ENCODE measurements at regions of chr18 and their contacts with region 1.

Region 1: DNA sequence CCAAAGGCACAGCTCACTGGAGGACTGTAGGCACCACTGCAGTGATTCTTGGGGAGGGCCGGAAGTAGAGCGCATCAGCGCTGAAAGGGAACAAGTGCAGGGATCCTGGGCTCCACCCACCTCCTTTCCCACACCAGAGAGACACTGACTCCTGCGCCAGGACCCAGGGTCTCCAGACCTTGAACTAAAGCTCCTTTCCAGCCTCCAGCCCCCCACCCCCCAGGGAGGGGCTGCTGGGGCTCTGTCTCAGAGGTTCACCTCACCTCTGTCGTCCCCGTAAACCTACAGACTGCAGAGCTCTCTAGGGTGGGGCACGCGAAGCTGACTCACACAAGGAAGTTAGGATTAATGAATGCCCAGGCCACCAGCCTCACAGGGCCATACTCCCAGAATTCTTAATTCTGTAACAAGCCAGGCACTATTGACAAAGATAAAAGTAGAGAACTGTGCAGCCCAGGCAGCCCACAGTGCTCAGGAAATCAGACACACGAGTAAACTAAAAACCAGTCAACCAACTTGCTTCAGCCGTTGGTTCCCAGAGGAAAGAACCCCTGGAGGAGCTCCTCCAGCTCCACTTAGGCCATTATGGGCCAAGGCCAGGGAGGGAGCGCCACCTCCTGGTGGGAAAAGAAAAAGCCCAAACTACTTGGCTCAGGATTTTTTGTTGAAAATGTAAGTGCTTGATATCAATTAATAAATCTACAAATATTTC is 45.1 kb upstream of the ACAA2 start:
- DNase-seq: peak; percentile 74
- ATAC-seq: peak; percentile 56
- H3K4me3 Mint-ChIP-seq: no peak overlapping the region
- H3K27ac Mint-ChIP-seq: no peak overlapping the region
- H3K4me1 Mint-ChIP-seq: no peaks in the 10 kb centered on the region
- H3K27me3 Mint-ChIP-seq: no peaks in the 10 kb centered on the region
- CTCF ChIP-seq: peak; percentile 97

Region 2: GRCh38 chr18:49510393-49511115 is 347.9 kb before region 1 on chr18:
- CTCF ChIA-PET with region 1: interaction called, 131 read pairs
- POLR2A ChIA-PET with region 1: no interaction called
- intact Hi-C with region 1: loop called (anchors 2 kb)
- DNase-seq: peak; percentile 64
- ATAC-seq: peak; percentile 64
- H3K4me3 Mint-ChIP-seq: no peak overlapping the region
- H3K27ac Mint-ChIP-seq: no peak overlapping the region
- H3K4me1 Mint-ChIP-seq: no peaks in the 10 kb centered on the region
- H3K27me3 Mint-ChIP-seq: peaks cover 12% of the 10 kb centered on the region
- CTCF ChIP-seq: peak; percentile 81

Region 3: DNA sequence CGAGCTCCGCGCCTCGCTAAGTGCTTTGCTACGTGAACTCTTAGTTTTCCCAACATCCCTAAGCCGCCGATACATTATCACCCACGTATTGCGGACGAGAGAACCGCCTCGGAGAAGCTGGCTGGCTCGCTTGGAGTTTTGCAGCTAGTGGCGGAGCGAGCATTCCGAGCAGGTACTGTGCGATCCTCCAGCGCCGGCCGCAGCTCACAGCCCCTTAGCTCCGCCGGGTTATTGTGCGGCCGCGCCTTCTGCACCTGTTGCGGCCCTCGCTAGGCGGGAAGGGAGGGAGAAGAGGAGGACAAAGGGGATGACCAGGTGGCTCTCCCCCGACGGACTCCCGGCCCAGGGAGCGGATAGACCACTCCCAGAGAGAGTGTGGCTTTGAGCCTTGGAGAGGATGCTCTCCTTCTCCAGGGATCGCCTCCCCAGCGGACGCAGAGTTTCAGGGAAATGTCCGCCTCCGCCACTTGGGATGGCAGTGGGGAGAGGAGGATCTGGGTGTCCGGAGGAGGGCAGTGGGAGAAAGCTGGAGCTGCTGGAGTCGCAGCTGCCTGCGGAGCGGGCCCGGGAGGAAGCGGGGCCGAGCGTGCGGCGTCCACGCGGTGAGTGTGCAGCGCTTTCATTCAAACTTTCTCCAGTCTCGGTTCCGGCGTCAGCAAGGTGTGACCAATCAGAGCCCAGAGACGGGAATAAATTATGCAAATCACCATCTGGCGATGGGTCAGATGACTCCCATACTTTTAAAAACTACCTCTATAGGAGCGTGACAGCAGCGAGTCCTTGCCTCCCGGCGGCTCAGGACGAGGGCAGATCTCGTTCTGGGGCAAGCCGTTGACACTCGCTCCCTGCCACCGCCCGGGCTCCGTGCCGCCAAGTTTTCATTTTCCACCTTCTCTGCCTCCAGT is 296.9 kb before region 1 on chr18 and contains the start of gene LIPG:
- CTCF ChIA-PET with region 1: interaction called, 27 read pairs
- POLR2A ChIA-PET with region 1: no interaction called
- intact Hi-C with region 1: loop called (anchors 1 kb)
- DNase-seq: peak; percentile 71
- ATAC-seq: peak; percentile 87
- H3K4me3 Mint-ChIP-seq: peak within 1 kb of the TSS; percentile 61
- H3K27ac Mint-ChIP-seq: no peak within 1 kb of the TSS
- H3K4me1 Mint-ChIP-seq: peaks cover 28% of the 10 kb centered on the region
- H3K27me3 Mint-ChIP-seq: peaks cover 64% of the 10 kb centered on the region
- CTCF ChIP-seq: no peak
- total RNA-seq, gene LIPG: 0.18 to 0.27 TPM

Region 4: DNA sequence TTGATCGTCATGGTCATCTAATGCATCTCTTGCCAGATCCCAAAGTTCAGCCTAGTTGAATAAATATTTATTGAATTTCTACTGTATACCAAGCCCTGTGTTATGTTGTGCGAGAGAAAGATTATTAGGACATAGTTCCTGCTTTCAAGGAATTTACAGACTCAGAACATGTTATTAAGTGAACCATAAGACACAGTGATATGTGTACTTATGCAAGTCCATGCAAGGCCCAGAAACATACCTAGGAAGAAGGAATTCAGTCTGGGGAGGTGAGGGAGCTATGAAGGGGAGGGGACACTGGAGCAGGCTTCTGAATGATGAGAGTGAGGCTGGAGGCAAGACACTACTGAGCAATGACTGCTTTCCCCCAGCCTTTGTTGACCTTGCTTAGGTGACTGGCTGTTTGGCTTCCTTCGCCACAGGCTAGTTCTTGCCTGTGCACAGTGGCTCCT is 126.6 kb before region 1 on chr18:
- CTCF ChIA-PET with region 1: interaction called, 14 read pairs
- POLR2A ChIA-PET with region 1: no interaction called
- intact Hi-C with region 1: no loop called
- DNase-seq: no peak
- ATAC-seq: no peak
- H3K4me3 Mint-ChIP-seq: no peak overlapping the region
- H3K27ac Mint-ChIP-seq: no peak overlapping the region
- H3K4me1 Mint-ChIP-seq: no peaks in the 10 kb centered on the region
- H3K27me3 Mint-ChIP-seq: no peaks in the 10 kb centered on the region
- CTCF ChIP-seq: no peak

Region 5: DNA sequence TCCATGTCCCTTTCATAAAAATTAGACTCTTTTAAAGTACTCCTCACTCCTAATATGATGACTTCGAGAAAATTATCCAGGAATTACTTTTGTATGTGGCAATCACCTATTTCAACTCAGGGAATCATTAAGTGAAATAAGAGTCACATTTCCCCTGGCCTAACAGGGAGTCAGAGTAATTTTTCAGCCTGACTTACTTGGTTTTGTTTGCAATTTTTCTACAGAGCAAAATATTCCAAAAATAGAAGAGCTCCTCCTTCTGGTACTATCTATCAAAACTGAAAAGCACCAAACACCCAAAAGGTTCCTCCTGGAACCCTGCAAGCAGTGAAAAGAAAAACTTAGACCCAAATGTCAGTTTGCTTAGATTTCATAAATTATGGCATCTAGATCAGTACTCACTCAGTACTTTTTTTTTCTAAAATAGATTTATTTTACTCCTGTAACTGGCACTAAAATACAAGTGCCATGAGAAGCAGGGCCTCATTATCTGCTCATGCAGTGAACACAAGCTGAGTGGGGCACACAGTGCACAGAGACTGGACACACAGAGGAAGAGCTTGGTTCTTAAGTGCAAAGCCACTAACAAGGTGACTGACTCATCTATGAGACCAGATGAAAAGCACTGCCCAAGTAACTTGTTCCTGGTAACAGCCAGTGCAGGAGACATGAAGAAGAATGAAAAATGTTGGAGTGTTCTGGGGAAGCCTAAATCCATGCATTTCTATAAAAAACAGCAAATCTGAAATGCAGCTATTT is 73.9 kb before region 1 on chr18:
- CTCF ChIA-PET with region 1: interaction called, 3 read pairs
- POLR2A ChIA-PET with region 1: no interaction called
- intact Hi-C with region 1: loop called (anchors 10 kb)
- DNase-seq: no peak
- ATAC-seq: no peak
- H3K4me3 Mint-ChIP-seq: no peak overlapping the region
- H3K27ac Mint-ChIP-seq: no peak overlapping the region
- H3K4me1 Mint-ChIP-seq: peaks cover 39% of the 10 kb centered on the region
- H3K27me3 Mint-ChIP-seq: no peaks in the 10 kb centered on the region
- CTCF ChIP-seq: no peak

Region 6: DNA sequence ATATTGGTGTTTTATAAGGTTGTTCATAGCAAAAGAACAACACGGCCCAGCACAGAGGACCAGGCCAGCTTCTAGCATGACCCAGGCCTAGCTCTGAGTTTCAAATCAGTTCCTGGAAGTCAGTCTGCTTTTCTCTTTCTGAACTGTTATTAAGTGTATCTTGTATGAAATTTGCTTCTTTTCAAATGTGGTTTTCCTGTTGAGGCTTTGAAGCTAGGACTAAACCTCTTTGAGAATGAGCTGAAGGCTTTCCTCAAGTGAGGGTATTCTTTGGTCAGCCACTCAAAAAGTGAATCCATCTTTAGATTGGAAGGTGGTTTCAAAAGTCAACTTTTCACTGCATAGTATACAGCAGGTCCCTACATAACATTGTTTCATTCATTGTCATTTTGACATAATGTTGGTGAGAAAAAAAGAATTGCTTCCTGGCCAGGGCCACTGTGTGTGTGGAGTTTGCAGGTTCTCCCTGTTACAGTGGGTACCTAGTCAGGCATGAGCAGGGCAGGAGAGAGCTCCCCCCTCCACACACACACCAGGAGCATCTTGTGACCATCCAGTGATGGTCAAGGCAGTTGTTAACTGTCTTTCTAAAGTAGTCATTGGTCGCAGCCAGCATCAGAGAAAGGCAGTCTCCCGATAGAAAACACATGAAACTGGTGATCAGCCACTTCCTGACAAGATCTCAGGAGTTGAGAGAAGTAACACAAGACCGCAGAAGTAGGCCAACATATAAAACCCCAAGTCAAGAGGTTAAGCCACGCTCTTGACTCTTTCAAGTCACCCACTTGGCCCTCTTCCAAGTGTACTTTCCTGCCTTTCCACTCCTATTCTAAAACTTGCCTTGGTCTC is 38.4 kb before region 1 on chr18:
- CTCF ChIA-PET with region 1: interaction called, 21 read pairs
- POLR2A ChIA-PET with region 1: no interaction called
- intact Hi-C with region 1: no loop called
- DNase-seq: peak; percentile 60
- ATAC-seq: peak; percentile 75
- H3K4me3 Mint-ChIP-seq: peak overlapping the region; percentile 27
- H3K27ac Mint-ChIP-seq: peak overlapping the region; percentile 93
- H3K4me1 Mint-ChIP-seq: peaks cover 63% of the 10 kb centered on the region
- H3K27me3 Mint-ChIP-seq: no peaks in the 10 kb centered on the region
- CTCF ChIP-seq: no peak